PC-3 (cell line): ENCODE measurements at regions of chr1 and their contacts with region 1.

Region 1: GRCh38 chr1:11037740-11038182 is 9.3 kb downstream of the MASP2 start:
- DNase-seq: peak; percentile 91
- ATAC-seq: peak; percentile 98
- H3K4me3 ChIP-seq: no peak overlapping the region
- H3K27ac ChIP-seq: no peak overlapping the region
- H3K4me1 ChIP-seq: no peaks in the 10 kb centered on the region
- H3K27me3 ChIP-seq: no peaks in the 10 kb centered on the region
- CTCF ChIP-seq: peak; percentile 98

Region 2: GRCh38 chr1:11180342-11180744 is 142.6 kb after region 1 on chr1:
- CTCF ChIA-PET with region 1: no interaction called
- POLR2A ChIA-PET with region 1: no interaction called
- intact Hi-C with region 1: loop called (anchors 10 kb)
- DNase-seq: peak; percentile 86
- ATAC-seq: peak; percentile 79
- H3K4me3 ChIP-seq: no peak overlapping the region
- H3K27ac ChIP-seq: peak overlapping the region; percentile 55
- H3K4me1 ChIP-seq: peaks cover 34% of the 10 kb centered on the region
- H3K27me3 ChIP-seq: no peaks in the 10 kb centered on the region
- CTCF ChIP-seq: no peak

Region 3: DNA sequence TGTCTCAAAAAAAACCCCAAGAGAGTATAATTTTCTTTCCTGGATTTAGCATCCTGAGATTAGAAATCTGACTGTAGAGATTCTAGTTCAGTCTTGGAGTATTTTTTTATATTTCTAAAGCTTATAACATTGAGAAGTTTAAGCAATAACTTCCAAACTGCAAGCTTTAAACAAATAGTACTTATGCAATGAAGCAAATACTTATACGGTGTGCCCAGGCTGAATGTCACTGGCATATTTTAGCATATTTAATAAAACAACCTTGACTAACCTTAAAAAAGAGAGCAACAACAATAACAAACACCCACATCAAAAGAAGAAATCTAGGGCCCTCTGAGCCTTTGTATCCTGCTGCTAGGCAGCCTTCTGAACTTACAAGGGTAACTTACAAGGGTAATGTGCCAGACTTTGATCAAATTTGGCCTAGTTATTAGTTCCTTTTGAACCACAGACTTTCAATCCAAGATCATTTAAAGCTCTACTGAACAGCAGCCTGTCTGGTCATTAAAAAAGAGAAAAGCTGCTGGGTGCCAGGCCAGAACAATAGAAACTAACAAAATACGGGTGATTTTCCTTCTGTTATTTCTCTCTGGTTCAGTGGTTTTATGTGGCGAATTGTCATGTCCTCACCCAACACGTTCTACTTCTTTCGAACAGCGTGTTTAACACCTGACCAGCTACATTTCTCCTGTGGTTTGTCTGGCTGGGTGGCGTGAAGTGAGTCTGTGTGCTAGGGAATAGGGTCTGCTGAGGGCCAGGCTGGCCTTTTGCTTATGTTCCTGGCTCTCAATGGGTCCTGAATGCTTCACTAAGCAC is 208.4 kb after region 1 on chr1:
- CTCF ChIA-PET with region 1: interaction called, 4 read pairs
- POLR2A ChIA-PET with region 1: no interaction called
- intact Hi-C with region 1: loop called (anchors 1 kb)
- DNase-seq: no peak
- ATAC-seq: no peak
- H3K4me3 ChIP-seq: no peak overlapping the region
- H3K27ac ChIP-seq: no peak overlapping the region
- H3K4me1 ChIP-seq: no peaks in the 10 kb centered on the region
- H3K27me3 ChIP-seq: no peaks in the 10 kb centered on the region
- CTCF ChIP-seq: no peak